Dorsolateral prefrontal cortex (tissue), 120 donors: ENCODE measurements at regions of chr11 and their contacts with region 1.

Region 1: GRCh38 chr11:126480410-126481302 is 125.2 kb downstream of the ST3GAL4 start:
- DNase-seq: peak; percentile 66 to 90 (median 86)
- H3K4me3 ChIP-seq: peak overlapping the region in 21 of 59 donors; percentile 3 to 51 (median 18)
- H3K27ac ChIP-seq: peak overlapping the region in 50 of 59 donors; percentile 23 to 90 (median 72)
- H3K27me3 ChIP-seq: no peaks in the 10 kb centered on the region
- CTCF ChIP-seq: peak; percentile 88 to 99 (median 97)

Region 2: DNA sequence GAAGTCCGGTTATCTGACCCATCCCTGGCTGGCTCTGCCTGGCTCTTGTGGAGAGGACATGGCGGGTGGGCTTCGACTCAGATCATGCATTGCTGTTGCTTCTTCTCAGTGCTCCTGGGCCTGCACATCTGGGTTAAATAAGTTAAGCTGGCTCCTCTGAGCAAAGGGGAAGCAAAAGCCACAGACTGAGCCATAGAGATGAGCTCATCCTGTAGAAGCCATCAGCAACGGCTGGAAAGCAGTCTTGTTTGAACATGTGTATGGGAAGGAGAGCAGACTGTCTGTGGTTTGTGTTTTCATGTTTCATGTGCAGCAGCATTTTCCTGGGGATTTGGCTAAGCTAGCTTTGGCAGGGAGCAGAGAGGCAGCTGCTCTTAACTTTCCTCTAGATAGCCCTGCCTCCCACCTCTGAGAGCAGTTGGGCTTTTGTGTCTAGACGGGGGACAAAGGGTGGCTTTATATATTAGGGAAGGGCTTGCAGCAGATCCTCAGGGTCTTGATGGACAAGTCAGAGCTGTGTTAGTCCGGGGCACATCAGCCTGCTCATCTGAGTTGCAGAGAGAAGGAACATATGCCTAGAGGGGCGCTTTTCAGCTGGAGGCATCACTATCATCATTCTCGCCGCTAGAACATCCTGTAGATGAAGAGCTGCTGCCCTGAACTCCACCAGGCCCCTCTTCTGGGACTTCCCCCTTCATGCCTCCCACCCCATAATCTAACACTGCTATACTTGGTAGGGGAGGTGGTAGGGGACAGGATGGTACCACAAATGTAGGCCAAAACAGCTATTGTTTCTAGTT is 161.9 kb before region 1 on chr11:
- intact Hi-C with region 1: no loop called
- DNase-seq: peak in 2 of 10 donors; percentile 25 to 39
- H3K4me3 ChIP-seq: peak overlapping the region in 24 of 59 donors; percentile 0 to 44 (median 16)
- H3K27ac ChIP-seq: peak overlapping the region in 52 of 59 donors; percentile 2 to 91 (median 61)
- H3K27me3 ChIP-seq: no peaks in the 10 kb centered on the region
- CTCF ChIP-seq: no peak

Region 3: GRCh38 chr11:126440792-126441514 is 39.7 kb before region 1 on chr11:
- intact Hi-C with region 1: loop called (anchors 1 to 2 kb)
- DNase-seq: peak; percentile 67 to 89 (median 81)
- H3K4me3 ChIP-seq: peak overlapping the region in 3 of 59 donors; percentile 2 to 18 (median 16)
- H3K27ac ChIP-seq: peak overlapping the region in 6 of 59 donors; percentile 9 to 65 (median 30)
- H3K27me3 ChIP-seq: no peaks in the 10 kb centered on the region
- CTCF ChIP-seq: peak; percentile 90 to 99 (median 98)